HEK293 (cell line): ENCODE measurements at regions of chr7 and their contacts with region 1.

Region 1: GRCh38 chr7:12458520-12459131 is 55.0 kb upstream of the VWDE start:
- H3K4me3 ChIP-seq: no peak overlapping the region
- H3K27ac ChIP-seq: no peak overlapping the region
- H3K4me1 ChIP-seq: 0 out of 2 replicates have a peak, but pooled peaks cover 3% of the 10 kb centered on the region
- CTCF ChIP-seq: 0 out of 2 replicates have a peak, but pooled peaks have one; percentile 36

Region 2: GRCh38 chr7:12281038-12281437 is 177.6 kb before region 1 on chr7:
- CTCF ChIA-PET with region 1: no interaction called
- POLR2A ChIA-PET with region 1: no interaction called
- H3K4me3 ChIP-seq: no peak overlapping the region
- H3K27ac ChIP-seq: no peak overlapping the region
- H3K4me1 ChIP-seq: no peaks in the 10 kb centered on the region
- CTCF ChIP-seq: no peak

Region 3: GRCh38 chr7:12389089-12389700 is 69.4 kb before region 1 on chr7:
- CTCF ChIA-PET with region 1: interaction called, 10 read pairs
- POLR2A ChIA-PET with region 1: no interaction called
- H3K4me3 ChIP-seq: no peak overlapping the region
- H3K27ac ChIP-seq: no peak overlapping the region
- H3K4me1 ChIP-seq: no peaks in the 10 kb centered on the region
- CTCF ChIP-seq: no peak

Region 4: GRCh38 chr7:12444785-12445184 is 13.8 kb before region 1 on chr7:
- CTCF ChIA-PET with region 1: interaction called, 24 read pairs
- POLR2A ChIA-PET with region 1: no interaction called
- H3K4me3 ChIP-seq: no peak overlapping the region
- H3K27ac ChIP-seq: no peak overlapping the region
- H3K4me1 ChIP-seq: no peaks in the 10 kb centered on the region
- CTCF ChIP-seq: no peak

Region 5: GRCh38 chr7:12475362-12476063 is 16.9 kb after region 1 on chr7:
- CTCF ChIA-PET with region 1: interaction called, 35 read pairs
- POLR2A ChIA-PET with region 1: no interaction called
- H3K4me3 ChIP-seq: no peak overlapping the region
- H3K27ac ChIP-seq: no peak overlapping the region
- H3K4me1 ChIP-seq: no peaks in the 10 kb centered on the region
- CTCF ChIP-seq: no peak

Region 6: DNA sequence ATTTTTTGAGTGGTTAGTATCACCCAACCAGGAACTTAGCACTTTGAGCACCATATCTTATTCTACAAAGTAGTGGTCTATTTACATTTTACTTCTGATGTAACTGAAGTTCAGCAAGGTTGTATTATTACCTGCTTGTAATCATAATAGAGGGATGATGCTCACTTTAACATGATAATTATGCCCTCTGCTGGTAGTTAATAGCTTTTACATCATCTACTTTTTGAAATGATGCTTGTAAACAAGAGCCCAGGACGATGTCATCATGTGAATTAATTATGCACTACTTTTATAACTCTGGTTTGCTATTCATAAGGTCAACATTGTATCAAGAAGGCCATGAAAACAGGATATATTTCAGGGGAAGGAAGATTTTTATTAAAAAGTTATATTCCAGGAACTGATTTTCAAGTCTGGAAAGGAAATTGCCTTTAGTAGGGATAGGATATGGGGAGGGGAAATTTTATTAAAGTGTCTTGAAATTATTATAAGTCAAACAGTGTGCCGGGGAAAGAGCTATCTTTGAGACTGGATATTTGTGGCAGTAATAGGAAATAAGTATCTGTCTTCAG is 31.6 kb after region 1 on chr7:
- CTCF ChIA-PET with region 1: interaction called, 123 read pairs
- POLR2A ChIA-PET with region 1: no interaction called
- H3K4me3 ChIP-seq: no peak overlapping the region
- H3K27ac ChIP-seq: no peak overlapping the region
- H3K4me1 ChIP-seq: peaks cover 3% of the 10 kb centered on the region; the same call in 1 of the 2 replicates
- CTCF ChIP-seq: 0 out of 2 replicates have a peak, but pooled peaks have one; percentile 8